Dendritic cell treated with granulocyte-macrophage colony-stimulating factor and Interleukin-4, amounts not matched to agents 40 ng/mL and 50 ng/mL, for 4 days (primary cell): ENCODE measurements at regions of chr21 and their contacts with region 1.

Region 1: GRCh38 chr21:34614633-34615486 is at the start of gene RCAN1:
- H3K4me3 Mint-ChIP-seq: peak within 1 kb of the TSS; percentile 81
- H3K27ac Mint-ChIP-seq: peak within 1 kb of the TSS; percentile 91
- H3K4me1 Mint-ChIP-seq: peaks cover 60% of the 10 kb centered on the region
- H3K27me3 Mint-ChIP-seq: no peaks in the 10 kb centered on the region

Region 2: DNA sequence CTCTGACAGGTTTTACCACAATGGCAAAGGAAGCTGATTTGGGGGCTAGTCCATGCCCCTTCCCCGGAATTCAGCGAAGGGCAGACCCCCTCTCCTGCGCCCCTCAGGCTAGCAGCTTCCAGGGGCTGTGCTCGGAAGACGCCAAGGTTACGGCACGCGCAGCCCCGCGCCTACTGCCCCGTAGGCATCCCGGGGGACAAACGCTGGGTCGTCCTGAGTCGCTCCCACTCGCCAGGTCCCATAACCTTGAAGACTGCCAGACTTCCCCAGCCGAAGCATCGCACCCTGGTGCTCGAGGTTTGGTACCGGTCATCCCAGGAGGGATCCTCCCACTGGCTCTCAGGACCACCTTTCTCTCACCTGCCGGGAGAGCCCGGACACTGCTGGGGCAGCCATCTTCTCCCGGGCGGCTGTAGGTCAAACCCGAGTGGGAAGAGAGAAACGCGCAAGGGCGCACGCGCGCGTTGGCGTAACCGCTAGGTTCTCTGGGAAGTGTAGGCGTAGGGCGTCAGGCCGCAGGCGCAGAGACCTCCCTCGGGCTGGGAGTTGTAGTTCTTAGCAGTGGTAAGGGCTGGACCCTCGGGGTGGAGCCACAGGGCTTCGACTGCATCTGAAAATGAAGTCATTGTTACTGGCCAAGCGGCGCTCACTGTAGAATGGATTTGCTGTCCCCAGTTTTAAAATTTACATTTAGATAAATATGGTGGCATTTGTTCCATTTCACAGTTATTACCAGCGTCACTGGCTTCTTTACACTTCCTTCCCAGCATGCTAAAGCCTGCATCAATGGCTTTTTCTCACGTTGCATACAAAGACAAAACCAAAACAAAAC is 699.3 kb before region 1 on chr21 and contains the start of gene ATP5PO:
- intact Hi-C with region 1: loop called (anchors 5 kb)
- H3K4me3 Mint-ChIP-seq: peak within 1 kb of the TSS; percentile 99
- H3K27ac Mint-ChIP-seq: peak within 1 kb of the TSS; percentile 96
- H3K4me1 Mint-ChIP-seq: peaks cover 13% of the 10 kb centered on the region
- H3K27me3 Mint-ChIP-seq: no peaks in the 10 kb centered on the region

Region 3: DNA sequence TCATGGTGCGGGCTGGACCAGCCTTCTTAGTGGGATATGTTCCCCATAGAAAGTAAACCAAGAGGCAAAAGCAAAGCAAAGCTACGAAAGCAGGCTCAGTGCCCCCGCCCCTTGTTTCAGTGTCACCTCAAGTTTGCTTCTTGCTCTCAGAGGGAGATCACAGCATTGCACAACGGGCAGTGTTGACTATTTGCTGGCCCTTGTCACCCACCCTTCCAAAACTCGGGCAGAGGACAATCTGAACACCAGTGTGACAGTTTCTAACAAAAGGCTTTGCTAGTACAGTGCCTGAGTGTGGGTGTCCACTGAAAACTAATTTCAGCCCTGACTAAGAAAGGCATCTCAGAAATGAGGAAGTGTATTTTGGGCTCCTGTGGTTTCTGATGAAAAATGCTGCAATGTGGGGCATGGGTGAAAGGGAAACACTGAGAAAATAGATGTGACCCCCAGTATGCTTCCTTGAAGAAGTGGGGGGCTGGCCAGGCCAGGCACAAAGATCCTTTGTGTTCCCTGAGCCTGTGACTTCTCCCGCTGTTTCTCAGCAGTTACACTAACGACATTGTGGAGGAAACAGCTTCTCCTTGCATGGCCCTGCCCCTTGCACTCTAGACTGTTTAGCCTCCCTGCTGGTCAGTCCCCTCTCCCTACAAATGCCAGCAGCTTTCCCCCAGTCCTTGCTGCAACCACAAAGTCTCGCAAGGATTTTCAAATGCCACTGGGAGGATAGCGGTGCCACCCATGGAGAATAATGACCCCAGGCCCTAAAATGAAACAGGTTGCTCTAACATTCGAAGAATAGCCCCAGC is 69.6 kb before region 1 on chr21:
- intact Hi-C with region 1: loop called (anchors 5 kb)
- H3K4me3 Mint-ChIP-seq: peak overlapping the region; percentile 53
- H3K27ac Mint-ChIP-seq: peak overlapping the region; percentile 88
- H3K4me1 Mint-ChIP-seq: peaks cover 61% of the 10 kb centered on the region
- H3K27me3 Mint-ChIP-seq: no peaks in the 10 kb centered on the region